GM10248 (cell line): ENCODE measurements at regions of chr19 and their contacts with region 1.

Region 1: DNA sequence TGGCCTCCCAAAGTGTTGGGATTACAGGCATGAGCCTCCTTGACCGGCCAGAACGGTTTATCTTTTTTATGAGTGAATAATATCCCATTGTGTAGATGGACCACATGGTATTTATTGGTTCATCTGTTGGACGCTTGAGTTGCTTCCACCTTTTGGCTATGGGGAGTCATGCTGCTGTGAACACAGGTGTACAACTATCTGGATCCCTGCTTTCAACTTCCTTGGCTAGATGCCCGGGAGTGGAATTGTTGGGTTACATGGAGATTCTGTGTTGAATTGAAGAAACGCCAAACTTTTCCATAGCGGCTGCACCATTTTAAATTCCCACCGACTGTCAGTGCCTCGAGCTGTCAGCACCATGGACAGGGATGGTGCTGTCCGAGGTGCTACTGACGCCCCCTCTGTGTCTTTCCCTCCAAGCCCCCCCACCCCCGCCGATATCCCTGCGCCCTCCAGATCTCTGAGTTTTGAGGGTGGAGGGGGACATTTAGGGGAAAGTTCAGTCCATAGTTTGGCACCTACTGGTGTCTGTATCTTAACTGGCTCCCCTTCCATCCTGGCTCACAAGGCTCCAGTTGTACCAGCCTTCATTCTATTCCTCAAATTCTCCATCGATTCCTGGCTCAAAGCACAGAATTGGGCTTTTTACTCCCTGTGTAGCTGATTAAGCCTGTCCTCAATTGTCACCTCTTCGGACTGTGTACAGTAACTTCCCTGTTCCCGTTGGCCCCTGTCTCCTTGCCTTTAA is 27.3 kb downstream of the PNPLA6 start:
- DNase-seq: peak; percentile 11
- CTCF ChIP-seq: no peak

Region 2: GRCh38 chr19:7550987-7551761 is 11.6 kb before region 1 on chr19:
- CTCF ChIA-PET with region 1: interaction called, 10 read pairs
- POLR2A ChIA-PET with region 1: interaction called, 3 read pairs
- DNase-seq: peak; percentile 56
- CTCF ChIP-seq: no peak

Region 3: GRCh38 chr19:7590261-7590660 is 27.4 kb after region 1 on chr19:
- CTCF ChIA-PET with region 1: interaction called, 13 read pairs
- POLR2A ChIA-PET with region 1: no interaction called
- DNase-seq: no peak
- CTCF ChIP-seq: no peak

Region 4: GRCh38 chr19:7605490-7606222 is 42.8 kb after region 1 on chr19:
- CTCF ChIA-PET with region 1: interaction called, 10 read pairs
- POLR2A ChIA-PET with region 1: no interaction called
- DNase-seq: peak; percentile 47
- CTCF ChIP-seq: no peak